ENCODE measurements at regions of chr16 and their contacts with region 1.

Region 1: DNA sequence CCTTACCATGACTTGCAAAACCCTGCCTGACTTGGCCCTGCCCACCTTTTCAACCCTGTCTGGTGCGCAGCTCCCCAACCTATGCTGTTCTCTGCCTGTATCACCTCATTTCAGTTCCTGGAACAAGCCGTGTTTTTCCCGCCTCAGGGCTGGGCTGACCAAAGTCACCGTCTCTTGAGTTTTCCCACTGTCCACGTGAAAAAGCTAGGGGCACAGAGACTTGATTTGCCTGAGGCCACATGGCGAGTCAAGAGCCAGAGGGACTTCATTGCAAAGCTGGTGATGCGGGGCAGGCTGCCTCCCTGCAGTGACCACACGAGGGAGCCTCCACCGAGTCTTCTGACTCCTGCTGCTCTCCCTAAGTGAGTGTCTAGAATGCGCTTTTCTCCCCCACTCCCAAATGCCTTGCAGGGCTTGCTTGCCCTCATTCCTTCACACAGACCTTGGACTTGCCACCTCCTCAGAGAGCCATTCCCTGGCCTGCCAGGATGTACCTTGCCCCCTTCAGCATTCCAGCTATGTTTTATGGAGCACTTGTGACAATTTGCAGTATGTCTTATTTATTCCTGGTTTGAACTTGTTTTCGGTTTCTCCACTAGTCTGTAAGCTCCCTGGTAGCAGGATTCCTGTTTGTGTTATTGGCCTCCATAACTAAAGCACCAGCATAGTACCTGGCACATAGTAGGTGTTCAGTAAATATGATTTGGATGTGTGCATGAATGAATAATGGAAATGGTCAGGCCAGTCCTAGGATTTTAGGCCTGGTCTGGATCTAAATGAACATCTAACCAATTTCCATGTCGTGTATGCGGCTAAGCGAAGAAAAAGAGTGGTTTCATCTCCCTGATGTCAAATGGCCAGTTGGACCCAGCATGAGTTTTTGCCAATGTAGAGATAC is 252.3 kb downstream of the SNX29 start:
- DNase-seq: peak; percentile 18 to 55
- H3K4me3 ChIP-seq: no peak overlapping the region
- H3K27ac ChIP-seq: peak overlapping the region in 1 of 2 donors; percentile 72
- H3K4me1 ChIP-seq: no peaks in the 10 kb centered on the region
- H3K27me3 ChIP-seq: no peaks in the 10 kb centered on the region
- CTCF ChIP-seq: peak in 1 of 3 donors; percentile 42
- POLR2A ChIP-seq: no peak

Region 2: GRCh38 chr16:12202298-12202885 is 26.5 kb before region 1 on chr16:
- intact Hi-C with region 1: loop called (anchors 1 kb)
- DNase-seq: no peak
- H3K4me3 ChIP-seq: no peak overlapping the region
- H3K27ac ChIP-seq: no peak overlapping the region
- H3K4me1 ChIP-seq: no peaks in the 10 kb centered on the region
- H3K27me3 ChIP-seq: no peaks in the 10 kb centered on the region
- CTCF ChIP-seq: no peak
- POLR2A ChIP-seq: no peak

Region 3: DNA sequence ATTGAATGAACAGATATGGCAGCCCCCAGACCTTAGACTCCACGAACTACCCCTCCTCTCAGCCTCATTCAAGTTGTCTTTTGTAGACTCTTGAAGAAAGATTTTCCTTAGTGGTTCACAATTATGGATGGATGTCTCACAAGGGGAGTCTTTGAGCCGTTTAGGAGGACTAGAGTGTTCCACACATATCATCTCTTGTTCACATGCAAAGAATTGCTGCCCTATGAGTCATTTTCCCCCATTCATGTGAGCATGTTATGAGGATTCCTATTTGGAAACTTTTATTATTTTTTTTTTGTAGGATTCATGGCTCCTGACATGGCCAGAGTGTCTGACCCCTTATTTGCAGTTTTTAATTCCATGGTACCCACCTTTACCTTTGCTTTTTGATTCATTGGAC is 909.7 kb after region 1 on chr16:
- intact Hi-C with region 1: no loop called
- DNase-seq: no peak
- H3K4me3 ChIP-seq: no peak overlapping the region
- H3K27ac ChIP-seq: no peak overlapping the region
- H3K4me1 ChIP-seq: no peaks in the 10 kb centered on the region
- H3K27me3 ChIP-seq: no peaks in the 10 kb centered on the region
- CTCF ChIP-seq: no peak
- POLR2A ChIP-seq: no peak